Posterior cingulate gyrus (tissue), 11 donors: ENCODE measurements at regions of chr11 and their contacts with region 1.

Region 1: DNA sequence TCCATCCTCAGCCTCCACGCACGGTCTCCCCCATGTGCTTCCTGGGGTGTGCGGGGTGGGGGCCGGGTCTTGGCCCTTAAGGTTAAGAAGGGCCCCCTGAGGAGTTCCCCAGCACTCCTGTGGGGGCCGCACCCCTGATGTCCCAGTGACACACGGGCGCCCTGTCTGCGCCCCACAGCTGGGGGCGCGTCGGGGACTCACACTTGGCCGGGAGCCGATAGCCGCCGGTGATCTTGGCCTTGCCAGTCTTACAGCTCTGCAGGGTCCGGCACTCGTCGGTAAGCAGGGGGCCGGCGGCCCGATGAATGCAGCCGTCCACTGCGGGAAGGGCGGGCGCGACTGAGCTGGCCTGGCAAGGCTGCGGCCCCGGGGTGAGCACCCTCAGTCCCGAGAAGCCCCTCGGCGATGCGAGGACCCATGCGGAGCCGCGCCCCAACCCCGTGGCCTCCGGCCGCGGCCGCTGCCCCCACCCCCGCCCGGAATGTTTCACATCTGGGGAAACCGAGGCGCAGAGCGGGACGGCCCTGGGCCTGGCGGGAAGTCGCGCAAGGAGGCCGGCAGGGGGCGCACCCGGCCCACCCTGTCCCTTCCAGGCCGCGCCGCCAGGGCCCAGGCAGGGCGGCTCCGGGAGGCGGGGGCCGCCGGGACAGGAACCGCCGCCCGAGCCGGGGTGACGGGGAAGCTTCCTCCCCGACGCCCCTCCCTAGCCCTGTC is 13.9 kb downstream of the OTUB1 start:
- DNase-seq: peak in 9 of 10 donors; percentile 58 to 96 (median 73)

Region 2: GRCh38 chr11:64036087-64037026 is 36.2 kb after region 1 on chr11:
- intact Hi-C with region 1: loop called (anchors 5 kb)
- DNase-seq: peak in 9 of 10 donors; percentile 33 to 91 (median 57)

Region 3: DNA sequence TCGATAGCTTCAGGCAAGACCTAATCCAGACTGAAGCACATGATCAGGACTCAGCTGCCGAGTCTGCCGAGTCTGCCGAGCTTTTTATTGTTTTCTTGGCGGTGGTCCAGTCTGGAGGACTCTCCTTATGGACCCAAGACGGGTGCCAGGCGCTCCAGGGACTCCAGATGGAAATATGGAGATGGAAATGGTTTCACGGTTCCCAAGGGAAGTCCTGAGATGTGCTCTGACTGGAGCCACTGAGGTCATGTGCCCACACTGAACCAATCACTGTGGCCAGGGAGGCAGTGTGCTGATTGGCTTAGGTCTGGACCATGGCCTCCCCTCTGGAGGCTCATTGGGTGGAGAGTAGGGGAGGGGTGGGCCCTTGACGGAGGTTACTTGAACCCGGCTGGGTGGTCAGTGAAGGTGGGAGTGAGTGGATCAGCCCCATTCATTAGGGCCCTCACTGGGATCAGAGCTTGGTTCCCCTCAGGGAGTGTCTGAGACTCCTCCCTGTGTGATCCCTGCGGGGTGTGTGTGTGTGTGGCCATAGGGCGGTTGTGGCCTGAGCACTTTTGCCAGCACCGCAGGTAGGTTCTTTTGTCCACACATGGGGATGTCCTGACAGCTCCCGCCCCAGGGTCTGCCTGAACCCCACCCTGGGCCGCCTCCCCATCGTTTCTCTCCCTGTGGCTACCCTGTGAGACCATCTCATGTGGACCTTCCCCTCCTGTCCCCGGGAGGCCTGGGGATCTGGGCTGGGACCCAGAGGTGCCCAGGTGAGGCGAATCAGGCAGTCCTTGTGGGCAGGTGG is 372.8 kb after region 1 on chr11:
- intact Hi-C with region 1: no loop called
- DNase-seq: peak; percentile 50 to 98 (median 86)